ENCODE measurements at regions of chr12 and their contacts with region 1.

Region 1: GRCh38 chr12:95623585-95624042 is 72.3 kb upstream of the USP44 start:
- DNase-seq: peak; percentile 87
- H3K4me3 ChIP-seq: no peak overlapping the region
- CTCF ChIP-seq: peak; percentile 80

Region 2: DNA sequence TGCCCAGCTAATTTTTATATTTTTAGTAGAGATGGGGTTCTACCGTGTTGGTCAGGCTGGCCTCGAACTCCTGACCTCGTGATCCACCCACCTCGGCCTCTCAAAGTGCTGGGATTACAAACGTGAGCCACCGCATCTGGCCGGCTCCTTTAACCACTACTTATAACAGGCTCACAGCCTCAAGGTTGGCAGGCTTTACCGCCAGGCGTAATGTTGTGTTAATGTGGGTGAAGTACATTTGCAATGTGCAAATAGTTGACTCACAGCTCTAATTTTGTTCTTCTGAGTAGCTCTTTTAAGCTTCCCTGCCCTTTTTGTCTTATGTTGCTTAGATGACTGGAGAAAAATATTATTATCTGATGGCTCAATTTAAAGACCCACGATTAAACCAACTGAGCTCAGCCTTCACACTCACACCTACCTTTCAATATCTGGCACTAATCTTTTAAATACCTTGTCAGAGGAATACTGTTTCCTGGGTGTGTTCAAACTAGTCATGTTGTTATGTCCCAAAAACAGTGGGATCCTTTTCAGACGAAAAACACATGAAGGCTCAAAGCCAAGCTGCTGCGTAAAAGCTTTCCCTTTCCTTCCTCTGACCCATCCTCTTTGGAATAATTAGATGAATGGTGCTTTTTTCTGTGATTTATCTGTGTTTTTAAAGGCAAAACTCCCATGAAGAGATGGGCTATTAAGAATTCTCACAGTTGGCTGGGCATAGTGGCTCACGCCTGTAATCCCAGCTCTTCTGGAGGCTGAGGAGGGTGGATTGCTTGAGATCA is 15.2 kb before region 1 on chr12:
- CTCF ChIA-PET with region 1: interaction called, 64 read pairs
- POLR2A ChIA-PET with region 1: no interaction called
- DNase-seq: no peak
- H3K4me3 ChIP-seq: no peak overlapping the region
- CTCF ChIP-seq: no peak

Measured in AG04449 (cell line).